Ascending aorta (tissue), 2 donors: ENCODE measurements at regions of chr1 and their contacts with region 1.

Region 1: GRCh38 chr1:209827384-209828262 is at the start of gene UTP25:
- DNase-seq: peak; percentile 76 to 97
- H3K4me3 ChIP-seq: peak within 1 kb of the TSS; percentile 44 to 92
- H3K27ac ChIP-seq: peak within 1 kb of the TSS; percentile 68 to 72
- H3K4me1 ChIP-seq: peaks cover 0 to 12% of the 10 kb centered on the region in 2 donors
- H3K27me3 ChIP-seq: no peaks in the 10 kb centered on the region
- CTCF ChIP-seq: peak; percentile 60 to 78 (median 73)
- total RNA-seq, gene UTP25: 3.6 TPM

Region 2: DNA sequence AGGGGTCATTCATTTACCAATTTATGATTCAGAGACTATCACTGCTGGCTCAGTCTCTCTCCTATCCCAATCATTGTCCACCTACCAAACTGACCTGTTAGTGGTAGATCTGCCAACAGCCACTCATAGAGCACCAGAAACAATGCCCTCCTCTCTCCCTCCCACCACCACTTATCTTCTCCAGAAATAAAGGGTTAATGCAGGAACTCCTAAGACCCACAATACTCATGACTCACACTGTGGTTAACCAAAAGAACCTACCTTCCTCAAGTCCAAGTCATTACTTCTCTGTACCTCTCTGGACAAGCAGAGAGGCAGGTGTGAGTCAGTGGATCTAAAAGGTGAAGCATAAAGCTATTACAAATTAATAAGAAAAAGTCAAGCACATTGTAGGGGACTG is 285.0 kb before region 1 on chr1:
- intact Hi-C with region 1: no loop called
- DNase-seq: no peak
- H3K4me3 ChIP-seq: no peak overlapping the region
- H3K27ac ChIP-seq: no peak overlapping the region
- H3K4me1 ChIP-seq: no peaks in the 10 kb centered on the region
- H3K27me3 ChIP-seq: no peaks in the 10 kb centered on the region
- CTCF ChIP-seq: no peak

Region 3: GRCh38 chr1:209618756-209619420 is 208.7 kb before region 1 on chr1:
- intact Hi-C with region 1: no loop called
- DNase-seq: no peak
- H3K4me3 ChIP-seq: no peak overlapping the region
- H3K27ac ChIP-seq: no peak overlapping the region
- H3K4me1 ChIP-seq: no peaks in the 10 kb centered on the region
- H3K27me3 ChIP-seq: no peaks in the 10 kb centered on the region
- CTCF ChIP-seq: no peak

Region 4: DNA sequence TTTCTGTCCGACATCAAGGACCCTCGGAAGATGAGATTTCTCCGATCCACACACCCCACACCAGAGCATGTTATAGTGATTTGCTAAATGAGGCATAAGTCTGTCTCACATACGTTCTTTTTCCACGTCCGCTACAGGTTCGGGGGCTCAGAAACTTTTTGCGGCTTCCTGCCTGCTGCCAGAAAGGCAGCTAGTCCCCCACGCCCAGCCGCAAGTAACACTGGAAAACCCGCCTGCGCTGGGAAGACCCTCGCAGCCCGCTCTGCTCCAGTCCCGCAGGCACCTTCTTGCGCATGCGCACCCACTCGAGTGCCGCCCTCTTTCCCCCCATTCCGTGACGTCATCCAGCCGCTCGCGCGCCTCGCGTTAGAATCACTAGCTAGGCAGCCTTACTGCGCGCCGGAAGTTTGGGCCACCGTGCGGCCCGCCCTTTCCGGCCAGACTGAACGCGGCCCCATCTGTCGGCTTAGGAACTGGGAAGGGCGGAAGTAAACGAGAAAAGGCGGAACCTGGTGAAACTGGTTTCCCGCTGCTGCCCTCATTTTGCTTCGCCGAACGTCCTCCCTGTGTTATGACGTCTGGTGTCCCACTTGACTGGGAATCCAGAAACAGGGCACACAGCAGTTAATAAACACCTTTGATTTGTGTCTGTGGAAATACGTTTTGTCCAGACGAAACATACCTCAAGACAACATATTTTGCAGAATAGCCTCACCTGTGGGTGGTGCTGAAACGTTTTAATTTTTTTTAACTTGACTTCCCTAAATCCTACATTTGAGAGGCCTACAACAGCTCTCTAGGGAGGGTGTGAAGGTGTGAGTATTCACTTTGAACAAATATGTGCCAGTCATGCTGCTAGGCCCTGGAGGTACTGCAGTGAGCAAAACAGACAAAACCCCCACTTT is 43.1 kb before region 1 on chr1 and contains the start of gene C1orf74:
- intact Hi-C with region 1: loop called (anchors 2 kb)
- DNase-seq: peak; percentile 93 to 100
- H3K4me3 ChIP-seq: peak within 1 kb of the TSS; percentile 71 to 81
- H3K27ac ChIP-seq: peak within 1 kb of the TSS; percentile 75 to 85
- H3K4me1 ChIP-seq: peaks cover 0 to 12% of the 10 kb centered on the region in 2 donors
- H3K27me3 ChIP-seq: no peaks in the 10 kb centered on the region
- CTCF ChIP-seq: no peak
- total RNA-seq, gene C1orf74: 0.11 TPM